ENCODE measurements at regions of chr15 and their contacts with region 1.

Region 1: DNA sequence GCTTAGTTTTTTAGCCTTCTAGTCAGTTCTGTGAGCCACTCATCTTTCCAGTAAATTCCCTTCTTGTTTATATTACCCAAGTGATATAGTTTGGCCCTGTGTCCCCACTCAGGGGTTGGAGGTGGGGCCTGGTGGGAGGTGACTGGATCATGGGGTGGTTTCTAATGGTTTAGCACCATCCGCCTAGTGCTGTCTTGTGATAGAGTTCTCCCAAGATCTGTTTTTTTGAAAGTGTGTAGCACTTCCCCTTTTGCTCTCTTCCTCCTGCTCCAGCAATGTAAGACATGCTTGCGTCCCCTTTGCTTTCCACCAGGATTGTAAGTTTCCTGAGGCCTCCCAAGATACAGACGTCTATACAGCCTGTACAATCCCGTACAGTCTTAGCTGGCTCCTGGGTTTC is 53.7 kb upstream of the INO80 start:
- DNase-seq: no peak
- CTCF ChIP-seq: no peak

Region 2: DNA sequence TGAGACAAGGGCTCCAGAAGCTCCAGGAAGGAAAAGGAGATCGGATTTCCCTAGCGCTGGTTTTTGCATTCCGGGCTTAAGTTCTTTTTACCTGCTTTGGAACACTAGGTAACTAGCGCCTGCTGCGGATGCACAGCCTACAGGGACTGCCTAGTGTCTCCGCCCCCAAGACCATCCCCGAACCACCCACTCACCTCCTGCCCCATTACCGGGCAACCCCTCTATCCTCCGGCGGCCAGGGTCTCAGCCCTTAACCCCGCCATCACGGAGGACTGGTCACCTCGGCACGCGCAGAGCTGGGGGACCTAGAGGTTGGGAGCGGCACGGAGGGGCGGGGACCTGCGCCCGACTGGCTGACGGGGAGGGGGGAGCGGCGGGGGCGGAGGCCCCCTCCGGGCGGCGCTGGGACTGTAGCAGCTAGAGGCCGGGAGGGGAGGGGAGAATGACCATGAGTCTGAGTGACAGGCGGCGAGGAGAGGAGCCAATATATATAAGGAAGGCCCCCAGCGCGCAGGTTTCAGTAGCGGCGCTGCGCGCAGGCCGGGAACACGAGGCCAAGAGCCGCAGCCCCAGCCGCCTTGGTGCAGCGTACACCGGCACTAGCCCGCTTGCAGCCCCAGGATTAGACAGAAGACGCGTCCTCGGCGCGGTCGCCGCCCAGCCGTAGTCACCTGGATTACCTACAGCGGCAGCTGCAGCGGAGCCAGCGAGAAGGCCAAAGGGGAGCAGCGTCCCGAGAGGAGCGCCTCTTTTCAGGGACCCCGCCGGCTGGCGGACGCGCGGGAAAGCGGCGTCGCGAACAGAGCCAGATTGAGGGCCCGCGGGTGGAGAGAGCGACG is 240.7 kb before region 1 on chr15 and contains the start of gene DLL4:
- in situ Hi-C with region 1: loop called (anchors 10 kb)
- DNase-seq: peak; percentile 84
- CTCF ChIP-seq: no peak

Region 3: GRCh38 chr15:41060505-41060904 is 109.3 kb before region 1 on chr15:
- in situ Hi-C with region 1: no loop called
- DNase-seq: no peak
- CTCF ChIP-seq: no peak

Region 4: GRCh38 chr15:41490355-41490754 is 320.6 kb after region 1 on chr15:
- in situ Hi-C with region 1: no loop called
- DNase-seq: peak; percentile 73
- CTCF ChIP-seq: no peak

Measured in GM13976 (cell line).